ENCODE measurements at regions of chr2 and their contacts with region 1.

Region 1: DNA sequence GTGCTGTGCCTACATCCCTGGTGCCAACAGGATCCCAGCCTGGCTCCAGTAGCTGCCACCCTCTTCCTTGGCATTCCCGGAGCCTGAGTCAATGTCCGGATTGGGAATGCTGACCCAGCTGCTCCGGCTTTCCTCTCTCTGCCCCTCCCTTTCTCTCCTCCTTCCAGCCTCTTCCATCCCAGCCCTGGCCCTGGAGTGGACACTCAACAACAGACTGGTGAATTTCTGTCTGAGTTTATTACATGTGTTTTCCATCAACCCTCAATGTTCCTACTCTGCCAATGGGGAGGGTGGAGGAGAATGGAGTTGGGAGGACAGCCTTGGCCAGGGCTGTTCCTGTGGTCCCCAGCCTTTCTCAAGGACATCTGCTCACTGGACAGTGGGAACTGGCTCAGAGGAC is 917 bp upstream of the PRKAG3 start:
- DNase-seq: no peak
- H3K4me3 ChIP-seq: no peak overlapping the region
- H3K27ac ChIP-seq: no peak overlapping the region
- H3K27me3 ChIP-seq: peaks cover 0 to 30% (median 0%) of the 10 kb centered on the region in 45 donors
- CTCF ChIP-seq: no peak

Region 2: DNA sequence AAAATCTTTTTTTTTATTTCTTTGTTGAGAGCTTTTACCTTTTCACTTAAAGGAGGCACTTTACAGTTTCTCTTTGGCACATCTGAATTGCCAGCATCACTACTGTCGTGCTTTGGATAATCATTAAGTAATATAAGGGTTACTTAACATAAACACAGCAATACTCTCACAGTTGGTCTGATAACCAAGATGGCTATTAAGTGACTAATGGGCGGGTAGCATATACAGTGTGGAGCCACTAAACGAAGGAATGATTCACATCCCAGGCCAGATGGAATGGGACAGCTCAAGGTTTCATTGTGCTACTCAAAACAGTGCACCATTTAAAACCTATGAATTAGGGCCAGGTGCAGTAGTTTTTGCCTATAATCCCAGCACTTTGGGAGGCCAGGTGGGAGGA is 292.5 kb before region 1 on chr2:
- intact Hi-C with region 1: loop called in 1 of 2 experiments (anchors 10 kb)
- DNase-seq: no peak
- H3K4me3 ChIP-seq: no peak overlapping the region
- H3K27ac ChIP-seq: no peak overlapping the region
- H3K27me3 ChIP-seq: no peaks in the 10 kb centered on the region
- CTCF ChIP-seq: no peak

Region 3: DNA sequence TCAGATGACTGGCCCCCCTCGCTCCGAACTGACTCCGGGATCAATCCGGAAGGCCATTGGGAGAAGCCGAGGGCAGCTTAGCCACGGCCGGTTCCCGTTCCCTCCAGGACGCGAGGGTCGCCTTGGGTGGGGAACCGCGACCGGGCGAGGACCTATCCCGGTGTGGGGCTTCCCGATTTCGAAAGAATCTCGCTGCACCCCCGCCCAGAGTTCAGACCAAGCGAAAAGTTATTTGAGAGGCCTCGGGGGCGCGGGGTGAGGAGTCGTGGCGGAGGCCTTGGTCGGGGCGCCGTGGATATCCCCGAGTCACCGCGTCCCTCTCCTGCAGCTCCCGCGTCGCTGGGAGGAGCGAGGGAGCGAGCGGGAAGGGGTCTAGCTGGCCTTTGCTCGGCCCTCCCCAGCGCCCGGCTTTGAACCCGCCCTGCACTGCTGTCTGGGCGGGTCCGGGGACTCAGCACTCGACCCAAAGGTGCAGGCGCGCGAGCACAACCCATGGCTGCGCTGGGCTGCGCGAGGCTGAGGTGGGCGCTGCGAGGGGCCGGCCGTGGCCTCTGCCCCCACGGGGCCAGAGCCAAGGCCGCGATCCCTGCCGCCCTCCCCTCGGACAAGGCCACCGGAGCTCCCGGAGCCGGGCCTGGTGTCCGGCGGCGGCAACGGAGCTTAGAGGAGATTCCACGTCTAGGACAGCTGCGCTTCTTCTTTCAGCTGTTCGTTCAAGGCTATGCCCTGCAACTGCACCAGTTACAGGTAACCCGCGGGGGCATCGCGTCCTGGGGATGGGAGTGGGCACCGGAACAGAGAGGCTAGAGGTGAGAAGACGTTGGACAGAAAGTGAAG is 50.6 kb before region 1 on chr2 and contains the start of gene CYP27A1:
- intact Hi-C with region 1: no loop called
- DNase-seq: peak; percentile 7 to 74 (median 69)
- H3K4me3 ChIP-seq: peak within 1 kb of the TSS; percentile 50 to 90 (median 77)
- H3K27ac ChIP-seq: peak within 1 kb of the TSS; percentile 9 to 96 (median 90)
- H3K27me3 ChIP-seq: peaks cover 0 to 15% (median 0%) of the 10 kb centered on the region in 45 donors
- CTCF ChIP-seq: peak in 2 of 56 donors; percentile 12
- total RNA-seq, gene CYP27A1: 12.4 to 139 (median 33.9) TPM

Region 4: DNA sequence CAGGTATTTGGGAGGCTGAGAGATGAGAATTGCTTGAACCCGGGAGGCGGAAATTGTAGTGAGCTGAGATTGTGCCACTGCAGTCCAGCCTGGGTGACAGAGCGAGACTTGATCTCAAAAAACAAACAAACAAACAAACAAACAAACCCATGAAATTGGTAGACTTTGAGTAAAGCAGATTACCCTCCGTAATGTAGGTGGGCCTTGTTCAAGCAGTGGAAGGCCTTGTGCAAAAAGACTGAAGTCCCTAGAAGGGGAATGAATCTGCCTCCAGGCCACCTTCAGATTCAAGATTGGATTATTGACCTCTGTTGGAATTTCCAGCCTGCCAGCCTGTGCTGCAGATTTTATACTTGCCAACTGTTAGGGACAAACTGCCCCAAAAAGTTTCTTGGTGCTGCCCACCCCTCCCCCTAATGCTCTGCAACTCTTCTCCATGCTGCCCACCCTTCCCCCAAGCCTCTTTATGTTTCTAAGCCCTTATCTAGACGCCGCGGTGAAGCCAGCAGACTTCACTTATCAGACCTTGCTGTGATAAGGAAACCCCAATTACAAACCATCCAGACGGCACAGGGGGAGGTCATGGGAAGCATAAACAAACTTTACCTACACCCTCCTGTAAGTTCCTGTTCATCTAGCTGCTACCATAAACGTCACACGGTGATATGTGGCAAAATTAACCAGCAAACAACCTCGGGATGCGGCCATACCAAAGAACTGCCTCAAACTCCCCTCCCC is 33.6 kb before region 1 on chr2:
- intact Hi-C with region 1: no loop called
- DNase-seq: no peak
- H3K4me3 ChIP-seq: no peak overlapping the region
- H3K27ac ChIP-seq: no peak overlapping the region
- H3K27me3 ChIP-seq: no peaks in the 10 kb centered on the region
- CTCF ChIP-seq: no peak

Region 5: DNA sequence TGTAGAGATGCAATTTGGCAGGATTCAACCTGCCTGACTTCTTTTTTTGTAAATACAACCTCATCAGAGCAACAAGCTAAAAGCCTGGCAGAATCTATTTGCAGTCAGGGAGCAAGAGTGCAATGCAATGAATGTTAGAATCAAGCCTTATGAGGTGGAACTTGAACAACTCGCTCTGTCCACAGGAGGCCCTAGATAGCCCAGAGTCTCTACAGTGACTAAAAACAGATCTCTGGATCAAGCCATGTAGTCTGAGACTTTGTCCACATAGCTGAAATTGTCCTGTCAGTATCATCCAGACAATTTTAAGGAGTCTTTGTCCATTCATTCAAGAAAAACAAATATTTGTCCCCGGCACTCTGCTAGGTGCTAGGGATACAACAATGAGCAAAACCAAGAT is 94.9 kb after region 1 on chr2:
- intact Hi-C with region 1: no loop called
- DNase-seq: no peak
- H3K4me3 ChIP-seq: no peak overlapping the region
- H3K27ac ChIP-seq: no peak overlapping the region
- H3K27me3 ChIP-seq: peaks cover 0 to 16% (median 0%) of the 10 kb centered on the region in 45 donors
- CTCF ChIP-seq: no peak